Natural killer cell (primary cell): ENCODE measurements at regions of chr1 and their contacts with region 1.

Region 1: DNA sequence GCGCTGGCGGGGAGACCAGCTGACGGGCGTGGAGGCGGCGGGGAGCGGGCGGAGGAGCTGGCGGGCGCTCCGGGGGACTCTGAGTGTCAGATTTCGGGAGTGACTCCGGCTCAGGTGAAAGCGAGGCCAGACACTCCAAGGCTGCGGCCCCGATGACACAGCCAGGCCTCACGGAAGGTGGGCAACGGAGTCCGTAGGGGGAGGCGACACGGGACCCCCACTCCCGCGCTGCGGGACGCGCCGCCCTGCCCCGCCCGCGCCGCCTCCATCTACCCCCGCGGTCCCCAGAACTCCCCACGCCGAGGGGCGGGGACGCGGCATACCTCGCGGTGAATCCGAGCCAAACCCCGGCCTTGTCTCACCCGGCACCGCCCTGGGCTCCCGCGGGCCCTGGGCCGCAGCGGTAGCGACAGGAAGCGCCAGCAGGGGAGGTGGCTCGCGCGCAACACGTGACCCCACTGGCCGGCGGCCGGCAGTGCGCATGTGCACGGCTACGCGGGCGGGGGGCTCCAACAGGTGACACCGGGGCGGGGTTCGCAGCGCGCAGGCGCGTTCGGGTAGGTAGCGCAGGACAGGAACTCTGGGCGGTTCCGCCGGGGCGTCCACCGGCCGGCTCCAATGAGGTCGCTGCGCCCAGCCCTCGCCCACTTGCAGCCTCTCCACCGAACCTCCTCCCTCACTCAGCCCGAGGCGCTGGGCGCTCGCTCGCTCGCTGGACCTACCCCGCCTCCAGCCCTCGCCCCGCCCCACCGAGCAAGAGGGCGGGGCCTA is at the start of gene CC2D1B:
- DNase-seq: peak; percentile 99 to 100
- ATAC-seq: peak; percentile 86 to 96 (median 91)
- H3K4me3 ChIP-seq: peak within 1 kb of the TSS; percentile 75
- H3K4me3 Mint-ChIP-seq: peak within 1 kb of the TSS; percentile 90
- H3K27ac ChIP-seq: peak within 1 kb of the TSS; percentile 92
- H3K27ac Mint-ChIP-seq: peak within 1 kb of the TSS; percentile 95 to 99
- H3K4me1 ChIP-seq: peaks cover 30% of the 10 kb centered on the region
- H3K4me1 Mint-ChIP-seq: peaks cover 15 to 39% of the 10 kb centered on the region in 2 donors
- H3K27me3 ChIP-seq: no peaks in the 10 kb centered on the region
- H3K27me3 Mint-ChIP-seq: peaks cover 0 to 4% of the 10 kb centered on the region in 2 donors
- CTCF ChIP-seq: no peak
- total RNA-seq, gene CC2D1B: 61.4 to 78.4 (median 68.8) TPM

Region 2: GRCh38 chr1:52033190-52034049 is 332.5 kb before region 1 on chr1 and contains the start of gene KTI12:
- intact Hi-C with region 1: loop called (anchors 5 kb)
- DNase-seq: peak; percentile 79 to 96
- ATAC-seq: peak; percentile 91 to 94 (median 94)
- H3K4me3 ChIP-seq: peak within 1 kb of the TSS; percentile 83
- H3K4me3 Mint-ChIP-seq: peak within 1 kb of the TSS; percentile 92
- H3K27ac ChIP-seq: peak within 1 kb of the TSS; percentile 95
- H3K27ac Mint-ChIP-seq: peak within 1 kb of the TSS; percentile 92 to 94
- H3K4me1 ChIP-seq: peaks cover 21% of the 10 kb centered on the region
- H3K4me1 Mint-ChIP-seq: peaks cover 31 to 40% of the 10 kb centered on the region in 2 donors
- H3K27me3 ChIP-seq: no peaks in the 10 kb centered on the region
- H3K27me3 Mint-ChIP-seq: no peaks in the 10 kb centered on the region
- CTCF ChIP-seq: no peak
- total RNA-seq, gene KTI12: 12.6 to 13.8 (median 13.2) TPM

Region 3: GRCh38 chr1:52263153-52263910 is 102.6 kb before region 1 on chr1:
- intact Hi-C with region 1: no loop called
- DNase-seq: no peak
- ATAC-seq: no peak
- H3K4me3 ChIP-seq: no peak overlapping the region
- H3K4me3 Mint-ChIP-seq: no peak overlapping the region
- H3K27ac ChIP-seq: no peak overlapping the region
- H3K27ac Mint-ChIP-seq: no peak overlapping the region
- H3K4me1 ChIP-seq: no peaks in the 10 kb centered on the region
- H3K4me1 Mint-ChIP-seq: no peaks in the 10 kb centered on the region
- H3K27me3 ChIP-seq: no peaks in the 10 kb centered on the region
- H3K27me3 Mint-ChIP-seq: peaks cover 0 to 12% of the 10 kb centered on the region in 2 donors
- CTCF ChIP-seq: no peak

Region 4: GRCh38 chr1:52726265-52727113 is 360.6 kb after region 1 on chr1 and contains the start of gene ZYG11B:
- intact Hi-C with region 1: loop called (anchors 1 kb)
- DNase-seq: peak; percentile 89 to 95
- ATAC-seq: peak; percentile 93 to 96 (median 95)
- H3K4me3 ChIP-seq: peak within 1 kb of the TSS; percentile 74
- H3K4me3 Mint-ChIP-seq: peak within 1 kb of the TSS; percentile 89
- H3K27ac ChIP-seq: peak within 1 kb of the TSS; percentile 26
- H3K27ac Mint-ChIP-seq: peak within 1 kb of the TSS; percentile 14 to 93
- H3K4me1 ChIP-seq: peaks cover 12% of the 10 kb centered on the region
- H3K4me1 Mint-ChIP-seq: peaks cover 23 to 29% of the 10 kb centered on the region in 2 donors
- H3K27me3 ChIP-seq: no peaks in the 10 kb centered on the region
- H3K27me3 Mint-ChIP-seq: peaks cover 0 to 10% of the 10 kb centered on the region in 2 donors
- CTCF ChIP-seq: no peak
- total RNA-seq, gene ZYG11B: 7.4 to 11.8 (median 10.7) TPM